Cardiac septum (tissue), 1 donor: ENCODE measurements at regions of chr2 and their contacts with region 1.

Region 1: GRCh38 chr2:219543601-219544358 is at the starts of genes CHPF and TMEM198:
- DNase-seq: peak; percentile 97
- total RNA-seq, gene CHPF: 120 TPM
- total RNA-seq, gene TMEM198: 1.8 TPM

Region 2: DNA sequence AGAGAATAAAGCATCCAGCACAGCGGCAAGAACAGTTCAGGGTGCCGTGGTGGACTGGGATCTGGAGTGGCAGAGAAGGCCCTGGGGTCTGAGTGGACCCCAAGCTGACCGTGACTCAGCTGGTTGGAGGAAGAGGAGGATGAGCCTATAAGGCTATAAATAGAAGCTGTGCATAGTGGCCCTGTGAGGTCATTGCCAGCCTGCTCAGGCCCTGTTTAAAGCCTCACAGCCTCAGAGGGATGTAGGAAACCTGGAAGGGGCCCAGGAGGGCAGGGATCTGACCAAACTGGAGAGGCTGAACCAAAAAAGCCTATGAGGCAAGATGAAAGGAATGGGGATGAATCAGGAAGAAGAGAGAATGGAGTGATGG is 136.9 kb before region 1 on chr2:
- intact Hi-C with region 1: no loop called
- DNase-seq: peak; percentile 88

Region 3: GRCh38 chr2:219597552-219598307 is 54.0 kb after region 1 on chr2 and contains the start of gene STK11IP:
- intact Hi-C with region 1: loop called (anchors 2 kb)
- DNase-seq: peak; percentile 97
- total RNA-seq, gene STK11IP: 20.2 TPM

Region 4: DNA sequence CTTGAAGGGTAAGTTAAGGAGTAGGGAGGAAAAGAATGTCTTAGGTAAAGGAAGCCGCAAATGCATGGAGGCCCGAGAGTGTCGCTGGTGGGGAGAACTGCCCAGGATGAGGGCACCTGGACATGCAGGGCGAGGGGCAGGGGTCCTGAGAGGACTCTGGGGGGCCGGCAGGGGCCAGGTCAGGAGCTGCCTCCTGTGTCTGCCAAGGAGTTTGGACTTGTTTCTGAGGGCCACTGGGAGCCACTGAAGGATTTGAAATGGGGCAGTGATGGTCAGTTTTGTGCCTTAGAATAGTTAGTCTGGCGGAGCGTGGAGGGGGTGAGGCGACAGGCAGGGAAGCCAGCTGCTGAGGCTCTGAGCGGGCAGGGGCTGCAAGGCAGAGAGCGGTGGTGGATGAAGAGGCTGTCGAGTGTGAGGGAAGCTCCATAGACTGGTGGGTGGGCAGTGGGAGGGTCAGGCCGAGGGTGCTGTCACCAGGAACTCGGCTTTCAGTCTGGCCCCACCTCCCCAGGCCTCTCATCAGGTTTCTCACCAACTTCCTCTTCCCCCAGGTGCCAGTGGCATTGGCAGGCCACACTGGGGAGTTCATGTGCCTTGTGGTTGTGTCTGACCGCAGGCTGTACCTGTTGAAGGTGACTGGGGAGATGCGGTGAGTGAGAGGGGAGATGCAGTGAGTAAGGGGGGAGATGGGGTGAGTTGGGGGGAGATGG is 69.0 kb after region 1 on chr2:
- intact Hi-C with region 1: no loop called
- DNase-seq: peak; percentile 44

Region 5: GRCh38 chr2:219633276-219634065 is 89.7 kb after region 1 on chr2:
- intact Hi-C with region 1: no loop called
- DNase-seq: no peak

Region 6: GRCh38 chr2:219689676-219690628 is 146.2 kb after region 1 on chr2:
- intact Hi-C with region 1: loop called (anchors 2 kb)
- DNase-seq: no peak